RWPE1 (cell line): ENCODE measurements at regions of chr22 and their contacts with region 1.

Region 1: DNA sequence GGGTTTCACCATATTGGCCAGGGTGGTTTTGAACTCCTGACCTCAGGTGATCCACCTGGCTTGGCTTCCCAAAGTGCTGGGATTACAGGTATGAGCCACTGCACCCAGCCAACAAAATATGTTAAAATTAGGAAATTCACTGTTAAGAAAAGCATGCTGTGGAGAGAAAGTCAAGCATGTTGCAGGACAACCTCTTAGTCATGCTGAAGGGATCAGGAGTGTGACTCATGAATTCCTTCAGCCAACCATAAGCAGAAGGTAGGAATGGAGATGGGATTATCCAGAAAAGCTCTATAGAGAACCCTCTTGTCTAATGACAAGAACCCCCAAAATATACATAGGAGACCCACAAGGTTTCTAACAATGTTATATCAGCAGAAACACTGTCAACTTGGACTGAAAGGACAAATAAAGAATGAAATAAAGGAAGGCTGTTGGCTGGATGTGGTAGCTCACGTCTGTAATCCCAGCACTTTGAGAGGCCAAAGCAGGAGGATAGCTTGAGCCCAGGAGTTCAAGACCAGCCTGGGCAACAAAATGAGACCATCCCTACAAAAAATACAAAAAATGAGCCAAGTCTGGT is 16.0 kb downstream of the MRTFA start:
- DNase-seq: peak; percentile 72
- H3K27ac ChIP-seq: peak overlapping the region; percentile 48; the same call in 1 of the 2 replicates
- CTCF ChIP-seq: no peak

Region 2: DNA sequence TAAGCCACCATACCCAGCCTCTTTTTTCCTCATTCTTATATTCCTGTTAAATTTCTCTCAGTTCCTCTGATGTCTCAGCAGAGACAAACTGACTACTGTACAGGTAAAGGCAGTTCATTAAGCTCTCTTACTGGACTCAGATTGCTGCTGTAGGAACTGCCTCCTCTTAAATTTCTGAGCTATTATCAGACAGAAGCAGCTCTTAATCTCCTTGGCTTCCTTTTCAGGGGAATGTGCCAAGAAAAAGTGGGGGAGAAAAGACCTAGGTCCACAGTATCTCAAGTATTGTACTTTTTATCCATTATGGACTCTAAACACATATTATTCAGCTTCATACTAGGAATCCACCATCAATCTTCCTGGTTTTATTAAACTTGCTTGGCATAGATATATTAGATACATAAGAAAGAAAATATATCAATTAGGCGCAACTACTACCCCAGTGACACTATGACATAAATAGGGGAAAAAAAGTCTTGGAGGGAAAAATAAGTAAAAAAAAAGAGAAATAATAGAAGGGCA is 10.2 kb before region 1 on chr22:
- CTCF ChIA-PET with region 1: interaction called, 3 read pairs
- POLR2A ChIA-PET with region 1: interaction called, 10 read pairs
- DNase-seq: no peak
- H3K27ac ChIP-seq: peak overlapping the region; percentile 55
- CTCF ChIP-seq: no peak